AG04450 (cell line): ENCODE measurements at regions of chr4 and their contacts with region 1.

Region 1: DNA sequence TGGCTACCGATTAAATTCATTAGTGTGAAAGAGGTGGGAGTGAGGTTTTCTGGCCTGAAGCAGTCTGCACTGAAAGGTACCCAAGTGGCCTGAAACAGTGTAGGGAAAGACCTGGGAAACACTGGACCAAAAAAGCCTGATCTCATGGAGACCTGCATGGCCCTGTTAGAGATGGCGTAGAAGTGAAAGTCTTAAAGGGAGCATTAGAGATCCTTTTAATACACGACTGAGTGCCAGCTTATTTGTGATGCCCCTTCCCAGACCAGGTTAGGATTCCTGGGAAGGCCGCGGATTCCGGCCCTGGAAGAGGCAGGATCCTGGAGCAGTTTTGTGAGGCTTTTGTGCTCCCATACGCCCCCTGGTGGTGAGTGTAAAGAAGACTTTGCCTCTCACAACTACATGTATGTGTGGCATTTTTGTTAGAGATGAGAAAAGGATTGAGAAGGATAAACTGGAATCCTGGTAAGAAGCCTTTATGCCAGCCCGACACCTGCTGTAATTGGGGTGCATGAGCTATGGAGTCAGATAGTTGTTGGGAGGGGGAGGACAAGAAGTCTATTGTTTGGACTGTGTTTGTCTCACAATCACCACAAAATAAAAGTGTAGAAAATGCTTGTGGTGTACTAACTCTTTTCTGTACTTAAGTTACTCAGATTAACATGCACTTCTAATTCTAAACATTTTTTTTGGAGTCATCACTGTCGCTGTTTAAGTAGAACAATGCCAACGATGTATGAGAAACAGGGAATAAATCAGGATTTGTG is 54.0 kb downstream of the JADE1 start:
- DNase-seq: peak; percentile 60
- H3K4me3 ChIP-seq: no peak overlapping the region
- H3K27ac ChIP-seq: peak overlapping the region; percentile 41
- H3K27me3 ChIP-seq: no peaks in the 10 kb centered on the region
- CTCF ChIP-seq: peak; percentile 90

Region 2: GRCh38 chr4:128427832-128428366 is 435.6 kb before region 1 on chr4:
- CTCF ChIA-PET with region 1: interaction called, 11 read pairs
- POLR2A ChIA-PET with region 1: no interaction called
- DNase-seq: peak; percentile 50
- H3K4me3 ChIP-seq: no peak overlapping the region
- H3K27ac ChIP-seq: no peak overlapping the region
- H3K27me3 ChIP-seq: no peaks in the 10 kb centered on the region
- CTCF ChIP-seq: peak; percentile 61

Region 3: DNA sequence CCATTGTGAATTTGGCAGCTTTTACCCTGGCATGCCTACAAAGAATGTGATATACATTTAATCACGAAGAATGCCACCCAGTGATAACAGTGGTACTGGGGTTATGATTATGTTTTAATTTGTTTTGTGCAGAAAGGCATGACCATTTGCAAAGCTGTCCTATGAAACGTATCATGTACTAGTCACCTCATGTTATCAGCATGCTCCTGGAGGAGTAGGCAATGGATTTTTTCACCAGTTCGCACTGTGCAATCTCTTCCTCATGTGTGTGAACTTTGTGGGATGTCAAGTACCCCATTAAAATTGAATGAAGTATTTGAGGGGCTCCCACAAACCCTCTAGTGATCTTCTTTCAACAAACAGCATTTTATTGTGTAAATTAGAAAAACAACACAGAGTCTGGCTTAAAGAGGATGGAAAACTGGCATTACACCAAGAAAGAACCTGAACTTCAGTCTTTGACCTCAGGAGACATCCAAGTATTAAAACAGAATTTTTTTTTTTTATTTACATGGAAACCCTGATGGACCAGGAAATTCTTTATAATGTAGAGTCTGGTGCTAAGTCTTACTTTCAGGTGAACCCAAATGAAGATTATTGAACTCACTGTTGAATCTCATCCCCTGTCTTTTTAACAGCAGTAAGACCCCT is 375.3 kb before region 1 on chr4:
- CTCF ChIA-PET with region 1: no interaction called
- POLR2A ChIA-PET with region 1: no interaction called
- DNase-seq: no peak
- H3K4me3 ChIP-seq: no peak overlapping the region
- H3K27ac ChIP-seq: no peak overlapping the region
- H3K27me3 ChIP-seq: no peaks in the 10 kb centered on the region
- CTCF ChIP-seq: no peak

Region 4: GRCh38 chr4:128565054-128565453 is 298.4 kb before region 1 on chr4:
- CTCF ChIA-PET with region 1: interaction called, 12 read pairs
- POLR2A ChIA-PET with region 1: no interaction called
- DNase-seq: no peak
- H3K4me3 ChIP-seq: no peak overlapping the region
- H3K27ac ChIP-seq: no peak overlapping the region
- H3K27me3 ChIP-seq: no peaks in the 10 kb centered on the region
- CTCF ChIP-seq: no peak

Region 5: DNA sequence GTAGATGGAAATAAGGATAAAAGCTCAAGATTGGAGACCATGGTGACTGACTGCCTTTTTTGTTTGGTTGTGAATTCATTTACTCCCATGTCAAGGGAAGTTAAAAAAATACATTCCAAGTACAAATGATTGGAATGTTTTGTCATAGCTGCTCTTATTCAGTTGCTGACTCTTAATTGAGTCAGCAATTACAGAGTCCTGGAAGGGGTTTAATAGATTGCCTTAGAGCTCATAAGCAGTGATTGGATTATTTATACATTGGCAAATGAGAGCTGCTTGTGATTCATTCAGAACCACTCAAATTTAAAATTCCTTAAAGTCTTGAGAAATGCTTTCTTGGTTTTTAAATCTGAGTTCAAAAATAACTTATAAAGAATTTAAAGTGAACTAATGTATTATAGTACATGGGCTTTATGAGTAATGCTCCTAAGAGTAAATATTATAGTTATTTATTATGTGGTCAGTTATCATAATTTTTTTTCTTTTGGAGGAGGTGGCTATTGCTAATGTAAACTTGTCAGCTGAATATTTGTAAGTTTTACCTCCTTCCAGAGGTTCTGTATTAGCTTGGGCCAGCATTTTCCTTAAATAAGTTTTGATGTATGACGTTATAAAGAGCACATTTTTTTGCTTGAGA is 40.4 kb before region 1 on chr4:
- CTCF ChIA-PET with region 1: interaction called, 25 read pairs
- POLR2A ChIA-PET with region 1: interaction called, 10 read pairs
- DNase-seq: peak; percentile 86
- H3K4me3 ChIP-seq: no peak overlapping the region
- H3K27ac ChIP-seq: no peak overlapping the region
- H3K27me3 ChIP-seq: no peaks in the 10 kb centered on the region
- CTCF ChIP-seq: no peak

Region 6: GRCh38 chr4:128879283-128879682 is 15.8 kb after region 1 on chr4:
- CTCF ChIA-PET with region 1: interaction called, 21 read pairs
- POLR2A ChIA-PET with region 1: interaction called, 3 read pairs
- DNase-seq: no peak
- H3K4me3 ChIP-seq: no peak overlapping the region
- H3K27ac ChIP-seq: no peak overlapping the region
- H3K27me3 ChIP-seq: no peaks in the 10 kb centered on the region
- CTCF ChIP-seq: no peak

Region 7: GRCh38 chr4:129014566-129015509 is 151.3 kb after region 1 on chr4:
- CTCF ChIA-PET with region 1: interaction called, 11 read pairs
- POLR2A ChIA-PET with region 1: no interaction called
- DNase-seq: no peak
- H3K4me3 ChIP-seq: no peak overlapping the region
- H3K27ac ChIP-seq: no peak overlapping the region
- H3K27me3 ChIP-seq: no peaks in the 10 kb centered on the region
- CTCF ChIP-seq: no peak